OCI-LY7 (cell line): ENCODE measurements at regions of chr18 and their contacts with region 1.

Region 1: GRCh38 chr18:11937874-11938478 is 29.9 kb upstream of the MPPE1 start:
- DNase-seq: peak; percentile 75
- H3K4me3 ChIP-seq: no peak overlapping the region
- H3K27ac ChIP-seq: no peak overlapping the region
- H3K4me1 ChIP-seq: no peaks in the 10 kb centered on the region
- CTCF ChIP-seq: peak; percentile 94

Region 2: DNA sequence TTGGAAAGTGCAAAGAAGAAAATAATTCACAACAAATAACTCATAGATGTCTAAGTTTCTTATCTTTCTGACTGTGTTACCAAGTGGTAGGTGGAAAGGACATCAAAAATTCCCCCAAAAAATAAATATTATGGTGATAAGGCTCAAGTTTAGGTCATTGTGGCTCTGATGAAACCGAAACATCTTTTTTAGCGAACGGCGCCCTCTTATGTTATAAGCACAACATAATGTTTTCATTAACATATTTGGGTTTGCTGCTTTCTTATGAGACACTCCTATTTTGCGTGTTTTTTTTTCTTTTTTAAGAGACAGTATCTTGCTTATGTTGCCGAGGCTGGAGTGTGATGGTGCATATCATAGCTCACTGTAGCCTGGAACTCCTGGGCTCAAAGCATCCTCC is 367.2 kb before region 1 on chr18:
- CTCF ChIA-PET with region 1: no interaction called
- POLR2A ChIA-PET with region 1: no interaction called
- intact Hi-C with region 1: no loop called
- DNase-seq: peak; percentile 40
- H3K4me3 ChIP-seq: no peak overlapping the region
- H3K27ac ChIP-seq: no peak overlapping the region
- H3K4me1 ChIP-seq: no peaks in the 10 kb centered on the region
- CTCF ChIP-seq: peak; percentile 75

Region 3: GRCh38 chr18:11995445-11996189 is 57.6 kb after region 1 on chr18:
- CTCF ChIA-PET with region 1: interaction called, 25 read pairs
- POLR2A ChIA-PET with region 1: interaction called, 7 read pairs
- intact Hi-C with region 1: loop called (anchors 1 kb)
- DNase-seq: peak; percentile 76
- H3K4me3 ChIP-seq: peak overlapping the region; percentile 20
- H3K27ac ChIP-seq: peak overlapping the region; percentile 25
- H3K4me1 ChIP-seq: peaks cover 28% of the 10 kb centered on the region
- CTCF ChIP-seq: peak; percentile 89

Region 4: GRCh38 chr18:12236934-12237832 is 299.2 kb after region 1 on chr18:
- CTCF ChIA-PET with region 1: no interaction called
- POLR2A ChIA-PET with region 1: no interaction called
- intact Hi-C with region 1: loop called (anchors 5 kb)
- DNase-seq: peak; percentile 51
- H3K4me3 ChIP-seq: no peak overlapping the region
- H3K27ac ChIP-seq: no peak overlapping the region
- H3K4me1 ChIP-seq: no peaks in the 10 kb centered on the region
- CTCF ChIP-seq: peak; percentile 90

Region 5: DNA sequence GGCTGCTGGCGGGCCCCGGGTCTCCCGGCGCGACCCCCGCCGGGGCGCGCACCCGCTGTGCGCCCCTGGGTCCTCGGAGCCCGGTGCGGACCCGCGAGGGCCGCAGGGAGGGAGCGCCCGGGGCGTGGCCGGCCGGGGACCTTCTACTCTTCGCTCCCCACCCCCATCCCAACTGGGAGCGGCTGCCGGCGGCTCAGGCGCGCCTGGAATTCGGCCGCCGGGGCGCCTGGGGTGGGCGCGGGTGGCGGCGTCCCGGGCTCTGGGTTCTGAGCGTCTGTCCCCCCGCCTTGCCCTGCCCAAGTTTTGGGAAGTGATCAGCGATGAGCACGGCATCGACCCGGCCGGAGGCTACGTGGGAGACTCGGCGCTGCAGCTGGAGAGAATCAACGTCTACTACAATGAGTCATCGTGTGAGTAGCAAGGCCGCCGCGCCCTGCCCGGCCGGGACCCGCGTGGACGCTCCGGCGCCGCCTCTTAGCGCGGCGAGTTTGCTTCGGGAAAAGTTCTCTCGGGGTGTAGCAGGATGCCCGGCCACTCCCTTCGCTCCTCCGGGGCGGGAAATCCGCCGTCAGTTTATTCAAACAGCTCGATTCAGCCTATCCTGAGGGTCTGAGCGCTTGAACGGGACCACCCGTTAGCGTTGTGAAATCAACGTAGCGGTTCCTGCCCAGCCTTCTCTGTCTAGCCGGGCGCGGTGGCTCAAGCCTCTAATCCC is 370.6 kb after region 1 on chr18:
- CTCF ChIA-PET with region 1: no interaction called
- POLR2A ChIA-PET with region 1: no interaction called
- intact Hi-C with region 1: no loop called
- DNase-seq: no peak
- H3K4me3 ChIP-seq: no peak overlapping the region
- H3K27ac ChIP-seq: no peak overlapping the region
- H3K4me1 ChIP-seq: no peaks in the 10 kb centered on the region
- CTCF ChIP-seq: no peak